ENCODE measurements at regions of chr22 and their contacts with region 1.

Region 1: DNA sequence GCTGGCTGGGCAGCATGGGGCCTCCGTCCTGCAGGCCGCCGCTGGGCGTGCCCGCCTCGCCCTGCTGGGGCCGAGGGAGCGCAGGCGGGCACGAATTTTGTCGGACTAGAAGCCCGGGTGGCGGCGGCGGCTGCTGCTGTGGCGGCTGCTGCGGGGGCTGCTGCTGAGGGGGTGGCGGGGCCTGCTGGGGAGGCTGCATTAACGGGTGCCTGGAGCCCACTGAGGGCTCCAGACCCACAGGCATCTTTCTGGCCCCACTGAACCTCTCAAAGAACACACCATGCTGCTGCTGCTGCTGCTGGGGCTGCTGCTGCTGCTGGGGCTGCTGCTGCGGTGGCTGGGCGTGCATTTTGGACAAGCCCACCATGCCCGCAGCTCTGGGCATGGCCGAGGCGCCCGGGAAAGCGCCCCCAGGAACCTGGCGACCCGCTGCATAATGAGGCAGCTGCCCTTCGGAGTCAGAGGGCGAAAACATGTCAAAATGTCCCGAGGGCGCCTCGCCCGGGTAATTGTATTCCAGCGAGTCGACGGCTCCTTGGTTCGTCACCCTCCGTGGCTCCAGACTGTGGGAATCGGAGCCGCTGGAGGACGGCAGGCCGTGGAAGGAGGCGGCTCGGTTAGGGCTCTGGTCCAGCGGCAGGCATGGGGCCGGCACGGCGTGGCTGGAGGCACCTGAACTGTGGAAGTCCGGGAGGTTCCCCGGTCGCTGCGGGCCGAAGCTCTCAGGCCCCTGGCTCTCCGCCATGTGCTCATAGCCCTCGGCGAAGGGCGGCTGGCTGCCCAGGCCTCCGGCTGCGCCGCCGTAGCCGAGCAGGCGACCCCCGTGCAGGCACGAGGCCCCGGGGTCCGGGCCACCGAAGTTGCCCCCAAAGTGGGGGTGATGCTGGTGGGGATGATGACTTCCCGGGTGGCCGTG is 2.0 kb downstream of the MN1 start:
- DNase-seq: peak; percentile 49 to 76 (median 66)
- H3K4me3 ChIP-seq: peak overlapping the region; percentile 57
- H3K27ac ChIP-seq: peak overlapping the region in 1 of 2 donors; percentile 39
- H3K4me1 ChIP-seq: peaks cover 20% of the 10 kb centered on the region
- H3K27me3 ChIP-seq: no peaks in the 10 kb centered on the region
- CTCF ChIP-seq: no peak
- EP300 ChIP-seq: no peak
- POLR2A ChIP-seq: no peak

Region 2: GRCh38 chr22:27602390-27602789 is 197.2 kb before region 1 on chr22:
- intact Hi-C with region 1: loop called in 1 of 4 experiments (anchors 1 kb)
- DNase-seq: no peak
- H3K4me3 ChIP-seq: no peak overlapping the region
- H3K27ac ChIP-seq: no peak overlapping the region
- H3K4me1 ChIP-seq: no peaks in the 10 kb centered on the region
- H3K27me3 ChIP-seq: no peaks in the 10 kb centered on the region
- CTCF ChIP-seq: no peak
- EP300 ChIP-seq: no peak
- POLR2A ChIP-seq: no peak

Region 3: GRCh38 chr22:27617214-27617881 is 182.2 kb before region 1 on chr22:
- intact Hi-C with region 1: loop called in 1 of 4 experiments (anchors 5 kb)
- DNase-seq: no peak
- H3K4me3 ChIP-seq: no peak overlapping the region
- H3K27ac ChIP-seq: no peak overlapping the region
- H3K4me1 ChIP-seq: no peaks in the 10 kb centered on the region
- H3K27me3 ChIP-seq: no peaks in the 10 kb centered on the region
- CTCF ChIP-seq: no peak
- EP300 ChIP-seq: no peak
- POLR2A ChIP-seq: no peak

Region 4: GRCh38 chr22:27757928-27758525 is 41.6 kb before region 1 on chr22:
- intact Hi-C with region 1: loop called in 1 of 4 experiments (anchors 2 kb)
- DNase-seq: no peak
- H3K4me3 ChIP-seq: no peak overlapping the region
- H3K27ac ChIP-seq: no peak overlapping the region
- H3K4me1 ChIP-seq: peaks cover 5% of the 10 kb centered on the region
- H3K27me3 ChIP-seq: no peaks in the 10 kb centered on the region
- CTCF ChIP-seq: no peak
- EP300 ChIP-seq: no peak
- POLR2A ChIP-seq: no peak